GM10248 (cell line): ENCODE measurements at regions of chr6 and their contacts with region 1.

Region 1: GRCh38 chr6:149593443-149593842 is 27.3 kb downstream of the GINM1 start:
- DNase-seq: no peak
- CTCF ChIP-seq: no peak

Region 2: DNA sequence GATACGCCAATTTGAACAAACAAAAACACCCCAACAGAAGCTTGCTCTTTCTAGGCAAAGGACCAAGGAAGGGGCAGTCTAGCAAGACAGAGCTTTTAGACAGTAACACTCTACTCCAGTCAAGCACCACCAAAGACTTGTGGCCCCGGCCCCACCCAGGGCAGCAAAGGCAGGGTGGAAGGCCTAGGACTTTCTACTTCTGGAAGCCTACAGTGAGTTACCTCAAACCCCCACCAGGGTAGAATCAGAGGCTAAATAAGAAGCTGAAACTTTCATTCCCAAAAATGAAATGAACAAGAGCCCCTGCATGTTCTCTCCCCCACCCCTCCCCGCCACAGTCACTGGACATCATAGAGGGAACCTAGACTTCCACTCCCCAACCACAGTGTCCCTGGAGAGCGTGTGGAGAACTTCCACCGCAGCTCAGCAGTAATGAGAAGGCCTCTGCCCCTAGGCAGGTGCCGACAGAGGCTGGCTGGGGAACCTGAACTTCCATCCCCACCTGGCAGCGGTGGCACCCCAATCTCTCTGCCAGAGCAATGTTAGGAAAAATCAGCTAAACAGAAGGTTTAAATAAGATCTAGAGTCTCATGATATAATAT is 15.0 kb after region 1 on chr6:
- CTCF ChIA-PET with region 1: interaction called, 11 read pairs
- POLR2A ChIA-PET with region 1: interaction called, 3 read pairs
- DNase-seq: no peak
- CTCF ChIP-seq: no peak